ENCODE measurements at regions of chrX and their contacts with region 1.

Region 1: DNA sequence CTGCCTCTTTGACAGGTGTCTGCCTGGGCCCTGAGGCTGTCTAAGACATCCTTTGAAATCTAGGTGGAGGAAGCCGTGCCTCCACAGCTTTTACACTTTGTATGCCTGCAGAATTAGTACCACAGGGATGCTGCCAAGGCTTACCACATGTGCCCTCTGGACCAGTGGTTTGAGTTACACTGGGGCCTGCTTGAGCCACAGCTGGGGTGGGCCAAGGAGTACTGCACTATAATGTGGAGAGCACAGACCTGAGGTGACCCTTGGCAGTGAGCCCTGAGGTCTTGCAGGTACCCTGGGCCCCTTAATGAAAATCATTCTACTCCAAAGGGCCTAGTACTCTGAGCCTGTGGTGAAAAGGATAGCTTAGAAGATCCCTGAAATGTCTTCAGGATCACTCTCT is 27.2 kb upstream of the IRS4 start:
- DNase-seq: no peak
- H3K4me3 ChIP-seq: no peak overlapping the region
- H3K27ac ChIP-seq: no peak overlapping the region
- H3K4me1 ChIP-seq: no peaks in the 10 kb centered on the region
- H3K27me3 ChIP-seq: no peaks in the 10 kb centered on the region
- CTCF ChIP-seq: no peak

Region 2: GRCh38 chrX:108216919-108217571 is 546.5 kb before region 1 on chrX:
- CTCF ChIA-PET with region 1: no interaction called
- POLR2A ChIA-PET with region 1: interaction called, 14 read pairs
- intact Hi-C with region 1: no loop called
- DNase-seq: no peak
- H3K4me3 ChIP-seq: no peak overlapping the region
- H3K27ac ChIP-seq: no peak overlapping the region
- H3K4me1 ChIP-seq: no peaks in the 10 kb centered on the region
- H3K27me3 ChIP-seq: no peaks in the 10 kb centered on the region
- CTCF ChIP-seq: no peak

Region 3: DNA sequence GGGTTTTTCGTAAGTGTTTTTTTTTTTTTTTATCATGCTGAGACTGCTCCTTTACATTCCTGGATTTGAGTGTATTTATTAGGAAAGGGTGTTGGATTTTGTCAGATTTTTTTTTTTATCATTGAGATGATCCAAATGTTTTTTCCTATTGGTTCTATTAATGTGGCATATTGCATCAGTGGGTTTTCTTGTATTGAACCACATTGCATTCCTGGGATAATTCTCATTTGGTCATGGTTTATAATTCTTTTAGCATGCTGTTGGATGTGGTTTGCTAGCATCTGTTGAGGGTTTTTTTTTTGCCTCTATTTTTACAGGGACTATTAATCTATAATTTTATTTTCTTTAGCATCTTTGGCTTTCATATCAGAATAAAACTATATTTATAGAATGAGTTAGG is 295.1 kb before region 1 on chrX:
- CTCF ChIA-PET with region 1: no interaction called
- POLR2A ChIA-PET with region 1: no interaction called
- intact Hi-C with region 1: no loop called
- DNase-seq: no peak
- H3K4me3 ChIP-seq: no peak overlapping the region
- H3K27ac ChIP-seq: no peak overlapping the region
- H3K4me1 ChIP-seq: no peaks in the 10 kb centered on the region
- H3K27me3 ChIP-seq: no peaks in the 10 kb centered on the region
- CTCF ChIP-seq: no peak

Region 4: DNA sequence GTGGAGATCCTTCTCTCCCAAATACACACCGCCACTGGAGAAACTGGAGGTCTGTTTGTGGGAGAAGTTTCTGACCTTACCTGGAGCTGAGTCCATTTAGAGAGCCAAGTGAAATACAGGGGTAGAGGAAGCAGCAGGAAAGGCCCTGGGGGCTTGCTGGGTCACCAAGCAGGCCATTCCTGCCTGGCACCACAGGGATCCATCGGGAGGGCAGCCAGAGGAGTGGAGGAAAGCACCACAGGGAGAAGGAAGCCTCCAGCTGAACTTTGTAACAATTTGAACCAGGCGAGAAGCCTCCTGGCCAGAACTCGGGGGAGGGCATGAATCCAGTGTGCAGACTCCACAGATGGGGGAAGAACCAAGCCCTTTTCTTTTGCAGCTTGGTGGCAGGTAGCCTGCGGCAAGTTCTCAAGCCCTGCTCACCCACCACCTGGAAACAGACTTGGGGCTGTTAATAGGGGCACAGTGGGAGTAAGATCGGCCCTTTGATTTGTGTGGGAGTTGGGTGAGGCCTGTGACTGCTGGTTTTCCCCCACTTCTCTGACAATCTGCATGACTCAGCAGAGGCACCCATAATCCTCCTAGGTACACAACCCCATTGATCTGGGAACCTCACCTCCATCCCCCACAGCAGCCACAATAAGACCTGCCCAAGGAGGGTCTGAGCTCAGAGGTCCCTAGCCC is 121.8 kb before region 1 on chrX:
- CTCF ChIA-PET with region 1: no interaction called
- POLR2A ChIA-PET with region 1: no interaction called
- intact Hi-C with region 1: no loop called
- DNase-seq: no peak
- H3K4me3 ChIP-seq: no peak overlapping the region
- H3K27ac ChIP-seq: 0 out of 2 replicates have a peak overlapping the region, but pooled peaks have one; percentile 7
- H3K4me1 ChIP-seq: no peaks in the 10 kb centered on the region
- H3K27me3 ChIP-seq: no peaks in the 10 kb centered on the region
- CTCF ChIP-seq: no peak